ENCODE measurements at regions of chr9 and their contacts with region 1.

Region 1: DNA sequence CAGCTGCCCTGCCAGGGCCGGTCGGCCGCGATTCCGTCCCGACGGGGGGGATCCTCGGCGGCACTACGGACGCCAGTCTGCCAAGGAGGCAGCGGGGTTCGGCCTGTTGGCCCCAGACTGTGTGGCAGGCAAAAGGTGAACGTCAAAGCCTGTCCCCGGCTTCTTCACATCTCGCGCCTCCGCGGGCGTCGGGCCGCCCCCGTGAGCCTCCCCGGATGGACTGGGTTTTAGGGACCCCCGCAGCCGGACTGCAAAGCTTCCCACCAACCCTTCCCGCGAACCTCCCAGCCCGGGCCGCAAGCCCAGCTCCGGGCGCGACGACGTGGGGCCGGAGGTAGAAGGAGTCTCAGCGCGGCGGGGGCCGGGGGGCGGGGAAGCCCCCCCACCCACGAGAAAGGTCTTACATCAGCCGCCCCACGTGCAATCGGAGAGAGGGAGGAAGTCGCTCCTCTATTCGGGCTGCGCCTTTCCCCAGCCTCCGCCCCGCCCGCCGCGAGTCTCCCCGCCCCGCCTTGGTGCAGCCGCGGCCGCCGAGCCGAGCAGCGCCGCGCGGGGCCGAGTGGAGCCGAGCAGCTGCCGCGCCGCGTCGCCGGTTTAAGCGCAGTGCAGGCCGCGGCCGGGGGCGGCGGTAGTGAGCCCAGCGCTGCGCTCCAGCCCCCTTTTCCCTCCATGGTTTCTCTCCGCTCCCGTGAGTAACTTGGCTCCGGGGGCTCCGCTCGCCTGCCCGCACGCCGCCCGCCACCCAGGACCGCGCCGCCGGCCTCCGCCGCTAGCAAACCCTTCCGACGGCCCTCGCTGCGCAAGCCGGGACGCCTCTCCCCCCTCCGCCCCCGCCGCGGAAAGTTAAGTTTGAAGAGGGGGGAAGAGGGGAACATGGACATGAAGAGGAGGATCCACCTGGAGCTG is at the start of gene ANP32B:
- DNase-seq: peak; percentile 86
- H3K4me3 ChIP-seq: peak within 1 kb of the TSS; percentile 82 to 90 (median 88)
- H3K27ac ChIP-seq: peak within 1 kb of the TSS; percentile 94
- H3K4me1 ChIP-seq: peaks cover 43% of the 10 kb centered on the region
- H3K27me3 ChIP-seq: no peaks in the 10 kb centered on the region
- CTCF ChIP-seq: peak; percentile 65 to 70
- total RNA-seq, gene ANP32B: 8.2 to 164 TPM

Region 2: GRCh38 chr9:98056269-98057137 is 73.6 kb after region 1 on chr9 and contains the start of gene NANS:
- CTCF ChIA-PET with region 1: interaction called, 4 read pairs
- dilution Hi-C with region 1: no loop called
- in situ Hi-C with region 1: no loop called
- intact Hi-C with region 1: loop called (anchors 2 kb)
- DNase-seq: peak; percentile 96
- H3K4me3 ChIP-seq: peak within 1 kb of the TSS; percentile 56 to 95 (median 57)
- H3K27ac ChIP-seq: peak within 1 kb of the TSS; percentile 62
- H3K4me1 ChIP-seq: peaks cover 10% of the 10 kb centered on the region
- H3K27me3 ChIP-seq: no peaks in the 10 kb centered on the region
- CTCF ChIP-seq: no peak
- total RNA-seq, gene NANS: 44.7 to 52.4 TPM

Measured in mammary epithelial cell (primary cell).